HAP-1 (cell line): ENCODE measurements at regions of chr3 and their contacts with region 1.

Region 1: GRCh38 chr3:169564883-169565282 is 98.6 kb downstream of the MECOM start:
- DNase-seq: no peak
- H3K4me3 ChIP-seq: no peak overlapping the region
- H3K4me1 ChIP-seq: peaks cover 34% of the 10 kb centered on the region
- H3K27me3 ChIP-seq: no peaks in the 10 kb centered on the region

Region 2: DNA sequence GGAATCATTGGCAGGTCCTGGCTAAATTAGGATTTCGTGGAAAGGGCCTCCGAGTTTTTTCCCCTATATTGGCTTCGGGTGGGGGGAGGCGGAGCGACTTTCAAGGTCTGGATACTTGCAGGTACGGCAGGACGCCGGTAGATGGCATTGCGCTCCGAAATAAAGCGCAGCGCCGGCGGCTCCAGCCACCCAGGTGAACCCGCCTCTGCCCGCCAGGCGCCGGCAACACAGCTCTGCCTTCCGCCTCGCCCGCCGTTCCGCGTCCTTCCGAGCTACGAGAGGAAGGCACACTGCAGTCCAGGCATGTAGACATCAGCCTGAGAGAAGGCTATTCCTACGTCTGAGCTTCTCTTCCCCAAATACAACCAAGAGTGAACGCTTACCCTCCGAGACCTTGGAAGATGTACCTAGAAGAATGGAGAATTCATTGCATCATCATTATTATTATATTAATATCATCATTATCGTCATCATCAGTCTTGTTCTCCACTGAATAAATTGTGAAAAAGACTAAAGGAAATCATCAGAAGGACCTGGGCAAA is 415.5 kb before region 1 on chr3:
- in situ Hi-C with region 1: loop called (anchors 25 kb)
- DNase-seq: peak; percentile 83 to 92
- H3K4me3 ChIP-seq: peak overlapping the region; percentile 4
- H3K4me1 ChIP-seq: peaks cover 19% of the 10 kb centered on the region
- H3K27me3 ChIP-seq: no peaks in the 10 kb centered on the region